Mammary epithelial cell (primary cell): ENCODE measurements at regions of chrX and their contacts with region 1.

Region 1: DNA sequence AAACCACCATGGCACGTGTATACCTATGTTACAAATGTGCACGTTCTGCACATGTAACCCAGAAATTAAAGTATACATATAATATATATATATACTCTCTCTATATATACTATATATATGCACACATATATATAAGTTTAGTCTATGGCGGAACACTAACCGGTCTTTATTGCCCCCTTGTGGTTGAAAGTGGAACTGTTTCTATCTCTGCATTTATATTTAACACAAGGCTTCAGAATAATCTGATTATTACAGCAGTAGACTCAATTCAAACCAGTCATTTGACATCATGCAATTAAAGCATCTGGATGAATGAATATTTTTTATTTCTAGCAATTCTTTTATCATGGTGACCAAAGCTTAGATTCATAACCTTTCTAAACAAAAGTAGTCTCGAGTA is 14.6 kb downstream of the RAB9B start:
- DNase-seq: no peak
- H3K4me3 ChIP-seq: no peak overlapping the region
- H3K27ac ChIP-seq: no peak overlapping the region
- H3K4me1 ChIP-seq: no peaks in the 10 kb centered on the region
- H3K27me3 ChIP-seq: no peaks in the 10 kb centered on the region
- CTCF ChIP-seq: peak; percentile 55 to 64

Region 2: DNA sequence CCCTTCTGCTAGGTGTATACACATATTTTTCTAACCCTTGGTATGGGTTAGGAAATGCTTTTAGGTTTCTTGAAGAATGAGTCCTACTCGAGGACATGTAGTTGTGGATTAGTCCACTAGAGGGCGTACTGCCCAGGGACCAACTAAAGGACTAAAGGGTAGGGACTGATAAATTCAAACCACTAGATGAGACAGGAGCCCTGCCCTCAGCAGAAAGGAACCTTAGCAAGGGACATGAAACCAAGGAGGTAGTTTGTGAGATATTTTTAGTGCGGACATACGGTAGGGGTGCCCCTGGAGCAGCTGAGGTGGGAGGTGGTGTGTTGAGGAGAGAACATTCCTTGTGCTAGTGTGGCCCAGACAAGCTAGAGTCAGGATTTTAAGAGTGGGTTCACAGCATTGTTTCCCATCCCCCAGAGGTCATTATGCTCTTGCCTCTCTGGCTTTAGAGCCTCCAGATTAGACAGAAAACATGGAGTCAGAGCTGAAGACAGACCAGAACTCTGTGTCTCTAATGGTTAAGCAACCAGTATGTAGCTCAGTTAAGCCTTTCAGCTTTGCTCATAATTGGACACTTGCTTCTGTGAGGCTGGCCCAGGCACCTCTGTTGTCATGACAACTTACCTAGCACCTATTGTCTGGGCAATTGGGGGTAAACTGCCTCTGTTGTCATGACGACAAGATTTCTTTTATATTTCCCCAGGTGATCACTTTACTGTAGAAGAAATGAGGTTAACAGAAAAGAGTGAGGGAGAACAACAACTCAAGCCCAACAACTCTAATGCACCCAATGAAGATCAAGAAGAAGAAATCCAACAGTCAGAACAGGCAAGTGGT is 105.8 kb before region 1 on chrX:
- CTCF ChIA-PET with region 1: no interaction called
- dilution Hi-C with region 1: no loop called
- in situ Hi-C with region 1: no loop called
- intact Hi-C with region 1: loop called (anchors 1 kb)
- DNase-seq: peak; percentile 39
- H3K4me3 ChIP-seq: no peak overlapping the region
- H3K27ac ChIP-seq: no peak overlapping the region
- H3K4me1 ChIP-seq: peaks cover 3% of the 10 kb centered on the region
- H3K27me3 ChIP-seq: peaks cover 2% of the 10 kb centered on the region
- CTCF ChIP-seq: peak; percentile 72 to 73

Region 3: DNA sequence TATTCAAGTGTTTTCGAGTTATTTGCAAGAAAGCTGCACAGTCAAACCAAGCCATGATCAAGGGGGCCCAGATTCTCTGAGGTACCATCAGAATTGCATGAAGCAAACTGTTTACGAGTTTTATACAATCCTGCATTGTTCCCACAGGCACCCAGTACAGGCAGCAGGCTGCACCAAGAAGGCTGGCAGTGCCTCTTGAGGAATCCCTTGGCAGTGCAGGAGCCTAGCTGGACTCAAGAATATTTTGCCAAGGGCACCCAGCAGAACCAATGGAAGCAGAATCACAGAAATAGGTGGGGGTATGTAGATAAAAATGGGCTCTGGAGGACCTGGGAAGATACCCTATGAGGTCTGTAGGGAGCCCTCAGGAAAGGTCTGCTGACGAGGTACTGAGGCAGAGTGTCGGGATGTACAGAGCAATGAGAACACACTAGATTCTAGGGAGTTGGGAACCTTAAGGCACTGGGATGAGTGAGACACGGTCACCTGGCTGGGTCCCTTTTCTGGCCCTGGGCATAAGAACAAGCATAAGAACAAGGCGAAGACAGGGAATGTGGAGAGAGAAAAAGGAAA is 43.3 kb before region 1 on chrX:
- CTCF ChIA-PET with region 1: no interaction called
- dilution Hi-C with region 1: no loop called
- in situ Hi-C with region 1: no loop called
- intact Hi-C with region 1: loop called (anchors 2 kb)
- DNase-seq: peak; percentile 32
- H3K4me3 ChIP-seq: no peak overlapping the region
- H3K27ac ChIP-seq: no peak overlapping the region
- H3K4me1 ChIP-seq: no peaks in the 10 kb centered on the region
- H3K27me3 ChIP-seq: no peaks in the 10 kb centered on the region
- CTCF ChIP-seq: peak; percentile 54 to 73

Region 4: GRCh38 chrX:103864886-103865534 is 47.5 kb after region 1 on chrX:
- CTCF ChIA-PET with region 1: no interaction called
- dilution Hi-C with region 1: no loop called
- in situ Hi-C with region 1: no loop called
- intact Hi-C with region 1: no loop called
- DNase-seq: no peak
- H3K4me3 ChIP-seq: no peak overlapping the region
- H3K27ac ChIP-seq: no peak overlapping the region
- H3K4me1 ChIP-seq: peaks cover 18% of the 10 kb centered on the region
- H3K27me3 ChIP-seq: no peaks in the 10 kb centered on the region
- CTCF ChIP-seq: no peak